ENCODE measurements at regions of chr1 and their contacts with region 1.

Region 1: GRCh38 chr1:70410604-70411359 is at the start of gene CTH:
- DNase-seq: peak; percentile 92
- H3K4me3 Mint-ChIP-seq: peak within 1 kb of the TSS; percentile 97
- H3K27ac Mint-ChIP-seq: peak within 1 kb of the TSS; percentile 95
- H3K4me1 Mint-ChIP-seq: peaks cover 23% of the 10 kb centered on the region
- H3K27me3 Mint-ChIP-seq: peaks cover 5% of the 10 kb centered on the region
- total RNA-seq, gene CTH: 12.3 and 12.9 TPM in 2 replicates

Region 2: GRCh38 chr1:70205434-70206118 is 205.2 kb before region 1 on chr1 and contains the start of gene LRRC40:
- intact Hi-C with region 1: loop called (anchors 5 kb)
- DNase-seq: peak; percentile 94
- H3K4me3 Mint-ChIP-seq: peak within 1 kb of the TSS; percentile 99
- H3K27ac Mint-ChIP-seq: peak within 1 kb of the TSS; percentile 99
- H3K4me1 Mint-ChIP-seq: peaks cover 49% of the 10 kb centered on the region
- H3K27me3 Mint-ChIP-seq: no peaks in the 10 kb centered on the region
- total RNA-seq, gene LRRC40: 23.3 and 23.4 TPM in 2 replicates

Region 3: GRCh38 chr1:70354332-70355110 is 56.3 kb before region 1 on chr1 and contains the start of gene ANKRD13C:
- intact Hi-C with region 1: loop called (anchors 1 kb)
- DNase-seq: peak; percentile 90
- H3K4me3 Mint-ChIP-seq: peak within 1 kb of the TSS; percentile 91
- H3K27ac Mint-ChIP-seq: peak within 1 kb of the TSS; percentile 94
- H3K4me1 Mint-ChIP-seq: peaks cover 28% of the 10 kb centered on the region
- H3K27me3 Mint-ChIP-seq: no peaks in the 10 kb centered on the region
- total RNA-seq, gene ANKRD13C: 24.7 and 25.8 TPM in 2 replicates

Region 4: GRCh38 chr1:70504176-70504820 is 93.5 kb after region 1 on chr1:
- intact Hi-C with region 1: loop called (anchors 5 kb)
- DNase-seq: no peak
- H3K4me3 Mint-ChIP-seq: no peak overlapping the region
- H3K27ac Mint-ChIP-seq: peak overlapping the region; percentile 30
- H3K4me1 Mint-ChIP-seq: peaks cover 14% of the 10 kb centered on the region
- H3K27me3 Mint-ChIP-seq: no peaks in the 10 kb centered on the region